Sciatic nerve (tissue), 2 donors: ENCODE measurements at regions of chr5 and their contacts with region 1.

Region 1: GRCh38 chr5:90529939-90530677 is 724 bp upstream of the LYSMD3 start:
- DNase-seq: peak; percentile 73
- ATAC-seq: peak; percentile 84

Region 2: GRCh38 chr5:90446961-90447360 is 83.1 kb before region 1 on chr5:
- intact Hi-C with region 1: loop called (anchors 10 kb)
- DNase-seq: no peak
- ATAC-seq: no peak

Region 3: DNA sequence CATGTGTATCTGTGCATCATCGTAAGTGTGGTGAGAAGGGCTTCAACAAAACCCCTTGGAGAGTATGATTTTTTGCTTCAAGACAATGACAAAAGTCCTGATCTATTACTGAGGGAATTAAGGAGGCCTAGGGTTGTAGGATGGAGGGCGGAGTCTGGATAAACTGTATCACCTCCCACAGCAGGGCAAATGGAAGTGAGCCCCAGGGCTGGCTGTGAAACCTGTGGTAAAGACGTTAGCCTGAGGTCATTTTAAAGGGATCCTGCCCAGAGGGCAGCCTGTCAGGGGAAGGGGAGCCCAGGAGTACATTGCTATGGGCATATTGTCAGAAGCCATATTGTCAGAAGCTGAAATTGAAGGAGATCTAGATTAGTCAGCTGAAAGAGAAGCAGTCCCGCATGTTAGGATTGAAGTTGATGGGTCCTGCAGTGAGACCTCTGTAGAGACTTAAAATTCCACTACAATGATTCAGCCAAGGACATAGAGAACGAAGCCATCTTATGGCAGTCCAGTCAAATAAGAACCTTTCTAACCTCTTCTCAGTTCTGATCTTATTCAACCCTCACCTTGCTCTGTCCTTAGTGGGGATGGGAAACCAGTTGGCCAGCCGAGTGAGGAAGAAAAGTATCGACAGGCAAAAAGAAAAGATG is 55.4 kb after region 1 on chr5:
- intact Hi-C with region 1: no loop called
- DNase-seq: no peak
- ATAC-seq: no peak